Activated naive CD4-positive, alpha-beta T cell treated with anti-CD3 and anti-CD28 coated beads for 36 hours (primary cell): ENCODE measurements at regions of chr7 and their contacts with region 1.

Region 1: DNA sequence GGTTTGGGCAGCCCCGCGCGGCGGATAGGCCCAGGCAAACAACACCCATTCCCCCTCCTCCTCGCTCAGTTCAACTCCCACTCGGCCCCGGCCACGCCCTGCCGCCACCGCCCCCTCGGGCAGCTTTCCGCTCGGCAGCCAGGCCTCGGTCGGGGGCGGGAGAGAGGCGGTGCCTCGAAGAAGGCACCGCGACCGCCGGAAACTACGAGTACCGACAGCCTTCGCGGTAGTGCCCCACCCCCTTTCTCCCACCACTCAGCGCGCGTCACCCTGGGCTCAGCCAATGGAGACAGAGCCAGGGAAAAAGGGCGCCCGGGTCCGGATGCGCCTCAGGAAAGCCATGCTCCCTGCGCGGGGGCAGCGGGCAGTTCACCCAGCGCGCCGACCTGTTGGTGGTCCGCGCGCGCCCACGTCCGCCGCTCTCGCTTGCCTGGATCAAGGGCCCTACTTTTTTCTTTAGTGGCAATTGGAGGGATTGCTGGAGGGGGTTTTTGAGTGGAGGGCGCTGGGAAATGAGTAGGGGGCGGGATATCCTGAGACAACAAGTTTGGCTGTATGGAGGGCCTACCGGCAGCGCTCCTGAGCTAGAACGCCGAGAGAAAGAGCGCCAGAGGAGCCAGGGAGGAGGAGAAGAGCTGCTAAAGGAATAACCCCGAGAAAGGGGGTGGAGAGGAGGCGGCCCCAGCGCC is 557 bp upstream of the SP4 start:
- DNase-seq: peak; percentile 99
- H3K4me3 Mint-ChIP-seq: peak overlapping the region; percentile 98
- H3K27ac Mint-ChIP-seq: peak overlapping the region; percentile 99
- H3K4me1 Mint-ChIP-seq: peaks cover 34% of the 10 kb centered on the region
- H3K27me3 Mint-ChIP-seq: no peaks in the 10 kb centered on the region

Region 2: DNA sequence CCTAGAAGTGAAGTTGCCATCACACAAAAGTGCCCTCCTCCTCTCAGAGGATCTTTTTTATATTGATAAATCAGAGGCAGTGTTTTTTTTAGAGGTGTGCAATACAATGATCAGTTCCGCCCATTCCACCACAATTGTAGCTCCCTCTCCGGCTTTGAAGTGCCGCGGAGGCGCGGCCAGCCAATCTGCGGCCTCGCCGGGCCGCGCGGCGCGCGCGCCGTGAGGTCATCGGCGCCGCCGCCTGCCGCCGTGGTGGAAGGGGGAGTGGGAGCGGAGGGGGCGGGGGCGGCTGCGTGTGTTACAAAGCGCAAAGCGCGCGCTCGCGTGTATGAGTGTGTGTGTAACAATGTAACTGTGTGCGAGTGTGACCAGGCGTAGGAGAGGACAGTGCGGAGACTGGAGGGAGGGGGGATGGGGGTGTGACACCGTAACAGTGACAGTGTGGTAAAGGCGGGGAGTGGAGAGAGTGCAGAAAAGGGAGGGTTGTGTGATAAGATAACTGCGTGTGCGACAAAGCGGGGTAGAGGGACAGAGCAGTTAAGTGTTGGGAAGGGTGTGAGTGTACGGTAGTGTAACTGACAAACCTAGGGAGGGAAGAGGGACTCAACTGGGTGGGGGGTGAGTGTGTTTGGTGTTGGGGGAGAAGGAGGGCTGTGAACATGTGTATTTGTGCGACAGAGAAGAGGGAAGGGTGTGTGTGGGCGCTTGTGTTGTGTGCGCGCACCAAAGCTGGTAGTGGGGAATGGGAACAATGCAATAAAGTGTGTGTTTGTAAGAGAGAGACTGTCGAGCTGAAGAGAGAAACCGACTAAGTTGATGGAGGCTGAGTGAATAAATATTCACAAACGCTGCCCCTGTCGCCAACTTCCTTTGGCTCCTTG is 640.3 kb before region 1 on chr7 and contains the start of gene SP8:
- CTCF ChIA-PET with region 1: no interaction called
- intact Hi-C with region 1: loop called (anchors 2 kb)
- DNase-seq: peak; percentile 38
- H3K4me3 Mint-ChIP-seq: peak within 1 kb of the TSS; percentile 69
- H3K27ac Mint-ChIP-seq: no peak within 1 kb of the TSS
- H3K4me1 Mint-ChIP-seq: peaks cover 27% of the 10 kb centered on the region
- H3K27me3 Mint-ChIP-seq: peaks cover 75% of the 10 kb centered on the region
- total RNA-seq, gene SP8: 0.07 TPM in 1 of 2 experiments, not detected in the other

Region 3: DNA sequence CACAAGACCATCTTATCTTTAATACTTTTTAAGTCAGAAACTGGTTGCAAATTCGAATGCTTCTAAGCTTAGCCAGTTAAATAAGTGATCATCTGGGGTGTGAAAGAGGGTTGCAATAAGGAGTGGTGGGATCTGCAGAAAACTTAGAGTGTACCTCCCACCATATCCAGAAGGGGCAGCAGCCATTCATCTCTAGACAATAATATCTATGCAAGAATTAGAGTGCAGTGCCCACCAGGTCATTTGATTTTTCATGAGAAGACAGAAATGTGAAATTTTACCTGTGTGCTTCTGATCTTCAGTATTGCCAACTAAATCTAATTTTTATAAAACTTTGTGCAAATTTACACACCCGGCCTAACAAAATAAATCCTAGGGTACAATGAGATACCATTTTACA is 126.6 kb before region 1 on chr7:
- CTCF ChIA-PET with region 1: interaction called, 3 read pairs
- intact Hi-C with region 1: loop called (anchors 1 kb)
- DNase-seq: no peak
- H3K4me3 Mint-ChIP-seq: no peak overlapping the region
- H3K27ac Mint-ChIP-seq: no peak overlapping the region
- H3K4me1 Mint-ChIP-seq: peaks cover 12% of the 10 kb centered on the region
- H3K27me3 Mint-ChIP-seq: no peaks in the 10 kb centered on the region

Region 4: DNA sequence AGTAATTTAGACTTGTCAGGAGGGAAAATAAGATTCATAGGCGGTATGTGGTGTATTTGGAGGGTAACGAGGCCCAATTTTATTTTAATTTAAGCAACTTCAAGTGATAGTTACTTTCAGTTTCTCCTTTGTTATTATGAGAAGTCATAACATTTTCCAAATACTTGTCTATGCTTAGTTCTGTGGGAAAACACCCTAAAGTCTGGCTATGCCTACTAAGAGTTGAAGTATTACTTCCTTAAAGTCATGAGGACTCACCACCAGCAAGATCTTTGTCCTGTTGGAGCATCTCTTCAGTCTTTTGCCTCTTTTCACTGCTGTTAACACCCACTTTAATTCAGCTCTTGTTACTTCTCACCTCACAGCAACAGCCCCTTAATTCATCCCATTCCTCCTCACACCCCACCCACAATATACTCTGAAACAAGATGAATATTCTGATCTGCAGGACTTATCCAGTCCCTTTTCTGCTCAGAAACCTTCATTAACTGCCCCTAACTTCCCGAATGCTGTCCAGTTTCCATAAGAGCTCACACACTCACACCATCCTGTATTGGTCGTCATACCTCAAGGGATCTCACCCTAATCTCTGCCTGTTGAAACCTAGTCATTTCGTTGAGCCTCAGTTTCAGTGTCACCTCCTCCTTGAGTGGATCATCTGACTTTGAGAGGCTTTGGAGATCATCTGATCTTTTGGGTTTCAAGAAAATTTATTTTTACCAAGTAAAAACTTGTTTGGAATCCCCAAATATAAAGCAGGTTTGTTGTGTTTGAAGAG is 176.8 kb after region 1 on chr7:
- CTCF ChIA-PET with region 1: no interaction called
- intact Hi-C with region 1: loop called (anchors 1 kb)
- DNase-seq: no peak
- H3K4me3 Mint-ChIP-seq: no peak overlapping the region
- H3K27ac Mint-ChIP-seq: peak overlapping the region; percentile 60
- H3K4me1 Mint-ChIP-seq: peaks cover 17% of the 10 kb centered on the region
- H3K27me3 Mint-ChIP-seq: peaks cover 2% of the 10 kb centered on the region

Region 5: GRCh38 chr7:22660732-22661131 is 1233.4 kb after region 1 on chr7:
- CTCF ChIA-PET with region 1: no interaction called
- intact Hi-C with region 1: loop called (anchors 5 kb)
- DNase-seq: peak; percentile 28
- H3K4me3 Mint-ChIP-seq: no peak overlapping the region
- H3K27ac Mint-ChIP-seq: no peak overlapping the region
- H3K4me1 Mint-ChIP-seq: peaks cover 36% of the 10 kb centered on the region
- H3K27me3 Mint-ChIP-seq: no peaks in the 10 kb centered on the region

Region 6: GRCh38 chr7:23013715-23014649 is 1586.7 kb after region 1 on chr7 and contains the start of gene HYCC1:
- CTCF ChIA-PET with region 1: no interaction called
- intact Hi-C with region 1: loop called (anchors 10 kb)
- DNase-seq: peak; percentile 99
- H3K4me3 Mint-ChIP-seq: peak within 1 kb of the TSS; percentile 89
- H3K27ac Mint-ChIP-seq: peak within 1 kb of the TSS; percentile 78
- H3K4me1 Mint-ChIP-seq: peaks cover 7% of the 10 kb centered on the region
- H3K27me3 Mint-ChIP-seq: peaks cover 3% of the 10 kb centered on the region
- total RNA-seq, gene HYCC1: 19.5 to 19.7 TPM